Brain microvascular endothelial cell (primary cell): ENCODE measurements at regions of chr6 and their contacts with region 1.

Region 1: GRCh38 chr6:148177589-148178233 is 164.9 kb upstream of the SASH1 start:
- DNase-seq: peak; percentile 61
- H3K4me3 ChIP-seq: no peak overlapping the region
- H3K27ac ChIP-seq: no peak overlapping the region
- H3K27me3 ChIP-seq: no peaks in the 10 kb centered on the region
- CTCF ChIP-seq: peak; percentile 83

Region 2: GRCh38 chr6:148263010-148263409 is 85.3 kb after region 1 on chr6:
- in situ Hi-C with region 1: no loop called
- DNase-seq: no peak
- H3K4me3 ChIP-seq: no peak overlapping the region
- H3K27ac ChIP-seq: no peak overlapping the region
- H3K27me3 ChIP-seq: no peaks in the 10 kb centered on the region
- CTCF ChIP-seq: no peak

Region 3: DNA sequence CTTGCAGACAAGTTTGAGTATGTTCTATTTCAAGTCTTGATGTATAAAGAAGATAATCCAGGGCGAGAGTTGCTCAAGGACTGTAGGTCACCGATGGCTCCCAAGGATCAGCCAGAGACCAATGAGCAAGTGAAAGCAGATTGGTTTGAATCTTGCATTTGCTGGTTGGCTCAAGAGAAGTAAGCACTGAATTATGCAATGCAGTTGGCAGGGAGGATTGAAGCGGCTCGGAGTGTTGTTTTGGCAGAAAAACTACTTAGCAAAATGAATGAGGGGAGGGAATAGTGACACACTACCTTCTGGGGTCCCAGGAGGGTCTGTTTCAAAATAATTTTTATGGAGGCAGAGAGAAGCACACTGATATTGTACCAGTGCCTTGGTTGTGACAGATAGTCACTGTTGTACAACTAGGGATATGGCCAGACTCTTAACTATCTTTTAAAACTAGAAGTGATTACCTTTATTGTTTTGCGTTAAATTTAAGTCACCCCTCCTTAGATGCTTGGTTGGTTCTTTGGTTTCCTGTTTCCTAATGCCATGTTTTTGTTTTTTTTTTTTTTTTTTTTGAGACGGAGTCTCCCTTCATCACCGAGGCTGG is 180.6 kb after region 1 on chr6:
- in situ Hi-C with region 1: no loop called
- DNase-seq: no peak
- H3K4me3 ChIP-seq: no peak overlapping the region
- H3K27ac ChIP-seq: no peak overlapping the region
- H3K27me3 ChIP-seq: no peaks in the 10 kb centered on the region
- CTCF ChIP-seq: no peak

Region 4: GRCh38 chr6:148464319-148465010 is 286.8 kb after region 1 on chr6:
- in situ Hi-C with region 1: loop called (anchors 25 kb)
- DNase-seq: peak; percentile 75
- H3K4me3 ChIP-seq: no peak overlapping the region
- H3K27ac ChIP-seq: no peak overlapping the region
- H3K27me3 ChIP-seq: no peaks in the 10 kb centered on the region
- CTCF ChIP-seq: peak; percentile 92

Region 5: GRCh38 chr6:148578245-148578732 is 400.6 kb after region 1 on chr6:
- in situ Hi-C with region 1: no loop called
- DNase-seq: peak; percentile 71
- H3K4me3 ChIP-seq: no peak overlapping the region
- H3K27ac ChIP-seq: no peak overlapping the region
- H3K27me3 ChIP-seq: no peaks in the 10 kb centered on the region
- CTCF ChIP-seq: peak; percentile 97

Region 6: DNA sequence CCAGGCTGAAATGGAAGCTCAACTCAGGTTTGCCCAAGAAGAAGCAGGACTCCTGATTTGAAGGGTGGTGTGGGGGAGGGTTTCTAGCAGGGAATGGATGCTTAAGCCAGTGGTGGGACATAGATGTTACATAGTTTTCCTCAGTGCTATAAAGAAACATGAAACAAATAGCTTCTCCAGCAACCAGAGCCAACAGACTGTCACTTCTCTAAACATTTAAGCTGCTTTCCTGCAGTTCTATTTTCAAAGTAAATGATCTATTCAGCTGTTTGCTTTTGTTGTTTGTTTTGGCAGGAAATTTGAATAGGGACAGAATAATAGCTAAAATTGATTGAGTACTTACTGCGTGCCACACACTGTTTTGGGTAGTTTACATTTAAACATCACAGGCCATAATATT is 738.1 kb after region 1 on chr6:
- in situ Hi-C with region 1: no loop called
- DNase-seq: no peak
- H3K4me3 ChIP-seq: no peak overlapping the region
- H3K27ac ChIP-seq: no peak overlapping the region
- H3K27me3 ChIP-seq: no peaks in the 10 kb centered on the region
- CTCF ChIP-seq: no peak